AG04450 (cell line): ENCODE measurements at regions of chr5 and their contacts with region 1.

Region 1: DNA sequence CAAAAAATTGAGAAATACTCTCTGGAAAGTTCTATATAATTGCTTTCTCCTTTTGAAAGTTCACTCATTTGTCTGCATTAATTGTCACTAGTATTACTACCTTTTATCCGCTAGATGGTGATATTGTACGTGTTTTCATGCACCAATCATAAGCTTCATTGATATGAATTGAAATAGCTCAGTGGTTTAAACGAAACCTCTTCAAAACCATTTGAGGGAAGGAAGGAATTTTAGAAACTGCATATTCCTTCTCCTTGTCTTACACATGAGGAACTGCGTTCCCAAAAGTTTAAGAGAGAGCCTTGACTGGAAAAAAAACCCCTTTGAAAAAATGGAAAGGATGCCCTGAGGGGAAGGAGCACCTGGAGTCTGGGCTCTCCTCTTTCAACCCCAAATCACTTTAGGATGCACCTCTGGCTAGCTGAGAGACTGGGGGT is 98.6 kb downstream of the YTHDC2 start:
- DNase-seq: peak; percentile 6
- H3K4me3 ChIP-seq: no peak overlapping the region
- H3K27ac ChIP-seq: no peak overlapping the region
- H3K27me3 ChIP-seq: no peaks in the 10 kb centered on the region
- CTCF ChIP-seq: peak; percentile 68

Region 2: DNA sequence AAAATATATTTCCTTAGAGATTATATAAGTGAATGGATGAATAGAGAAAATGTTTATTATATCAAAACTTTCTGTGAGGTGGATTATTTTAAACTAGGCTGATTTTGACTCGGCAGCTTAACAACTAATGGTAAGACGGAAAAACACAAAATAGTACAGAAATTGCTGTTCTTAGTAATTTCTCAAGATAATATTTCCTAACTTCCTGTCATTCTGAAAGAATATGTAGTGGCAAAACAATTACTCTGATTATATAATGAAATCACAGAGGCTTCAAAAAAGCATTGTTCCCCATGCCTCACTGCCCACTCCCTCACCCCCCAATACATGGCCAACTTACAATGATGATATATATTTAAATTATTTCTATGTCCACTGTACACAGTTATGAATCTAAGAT is 13.2 kb before region 1 on chr5:
- CTCF ChIA-PET with region 1: interaction called, 19 read pairs
- POLR2A ChIA-PET with region 1: no interaction called
- DNase-seq: no peak
- H3K4me3 ChIP-seq: no peak overlapping the region
- H3K27ac ChIP-seq: no peak overlapping the region
- H3K27me3 ChIP-seq: no peaks in the 10 kb centered on the region
- CTCF ChIP-seq: no peak

Region 3: GRCh38 chr5:113663880-113664541 is 51.9 kb after region 1 on chr5:
- CTCF ChIA-PET with region 1: interaction called, 200 read pairs
- POLR2A ChIA-PET with region 1: no interaction called
- DNase-seq: peak; percentile 13
- H3K4me3 ChIP-seq: no peak overlapping the region
- H3K27ac ChIP-seq: no peak overlapping the region
- H3K27me3 ChIP-seq: peaks cover 6% of the 10 kb centered on the region
- CTCF ChIP-seq: peak; percentile 68

Region 4: DNA sequence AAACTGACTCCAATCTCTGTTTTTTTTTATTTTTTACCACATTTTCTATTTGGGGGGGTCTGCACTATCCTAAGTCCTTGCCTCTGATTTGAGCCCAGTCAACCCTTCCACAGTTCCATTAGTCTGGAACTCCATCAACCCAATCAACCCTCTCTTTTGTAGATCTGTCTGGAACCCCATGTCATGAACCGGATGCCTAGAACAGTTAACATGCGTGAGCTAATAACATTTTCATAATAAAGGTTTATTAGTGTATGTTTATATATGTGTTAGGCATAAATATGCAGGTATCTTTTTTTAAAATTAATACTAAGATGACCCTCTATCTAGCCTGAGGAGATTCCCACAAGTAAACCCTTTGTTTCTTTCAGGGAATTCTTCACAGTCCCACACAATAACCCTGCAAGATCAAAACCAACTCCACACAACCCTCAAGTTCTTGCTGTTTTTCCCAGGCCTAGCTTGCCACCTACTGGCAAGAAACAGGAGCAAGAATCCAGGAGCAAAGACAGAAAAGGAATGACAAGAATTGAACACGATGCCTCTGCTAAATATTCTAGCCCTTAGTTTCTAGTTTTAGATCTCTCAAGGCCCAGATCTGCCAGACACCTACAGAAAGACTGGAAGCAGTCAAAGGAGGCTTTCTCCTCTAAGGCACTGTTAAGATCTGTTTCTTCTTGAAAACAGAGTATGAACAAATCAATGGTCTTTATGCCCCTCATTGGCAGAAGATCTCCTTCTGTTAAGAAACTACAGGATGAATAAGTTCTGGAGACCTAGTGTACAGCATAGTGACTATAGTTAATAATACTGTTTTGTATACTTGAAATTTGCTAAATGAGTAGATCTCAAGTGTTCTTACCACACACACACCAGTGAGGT is 1457.2 kb after region 1 on chr5:
- CTCF ChIA-PET with region 1: interaction called, 22 read pairs
- POLR2A ChIA-PET with region 1: no interaction called
- DNase-seq: peak; percentile 27
- H3K4me3 ChIP-seq: no peak overlapping the region
- H3K27ac ChIP-seq: no peak overlapping the region
- H3K27me3 ChIP-seq: no peaks in the 10 kb centered on the region
- CTCF ChIP-seq: peak; percentile 67